ENCODE measurements at regions of chr3 and their contacts with region 1.

Region 1: DNA sequence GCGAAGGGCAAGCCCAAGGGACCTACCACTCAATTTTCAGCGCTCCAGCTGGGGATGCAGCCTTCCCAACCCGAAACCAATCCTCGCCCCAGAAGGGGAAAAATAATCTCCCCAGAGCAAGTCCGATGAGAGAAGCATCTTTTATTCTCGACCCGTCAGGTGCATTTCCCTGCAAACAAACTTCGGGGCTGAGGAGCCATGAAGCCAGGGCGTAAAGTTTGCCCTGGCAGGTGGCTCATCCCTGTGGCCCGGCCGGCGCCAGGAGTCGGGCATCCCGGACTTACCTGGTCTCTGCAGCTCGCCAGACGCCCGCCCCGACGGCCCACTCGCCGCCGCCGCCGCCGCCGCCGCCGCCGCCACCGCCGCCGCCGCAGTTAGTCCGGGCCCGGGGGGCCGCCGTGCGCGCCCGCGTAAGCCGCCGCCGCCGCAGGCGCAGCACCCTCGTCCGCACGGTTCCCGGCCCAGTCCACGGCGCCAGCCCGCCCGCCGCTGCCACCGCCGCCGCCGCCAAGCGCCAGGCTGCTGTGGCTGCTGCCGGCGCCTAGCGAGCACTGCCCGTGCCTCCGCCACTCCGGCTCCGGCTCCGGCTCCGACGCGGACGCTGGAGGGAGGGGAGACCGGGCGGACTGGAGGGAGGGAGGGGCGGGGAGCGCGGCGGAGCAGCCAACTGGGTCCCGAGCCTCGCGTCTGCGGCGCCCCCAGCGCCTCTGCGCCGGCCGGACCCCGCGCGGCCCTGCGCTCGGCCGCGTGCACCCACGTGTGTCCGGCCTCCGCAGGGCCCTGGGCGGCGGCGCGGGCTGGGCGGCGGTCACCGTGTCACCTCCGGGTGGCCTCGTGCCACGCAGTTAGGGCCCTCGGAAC is at the start of gene CNTN3:
- DNase-seq: peak; percentile 26
- H3K4me3 Mint-ChIP-seq: peak within 1 kb of the TSS; percentile 74
- H3K27ac Mint-ChIP-seq: peak within 1 kb of the TSS; percentile 36
- H3K4me1 Mint-ChIP-seq: peaks cover 14% of the 10 kb centered on the region
- H3K27me3 Mint-ChIP-seq: no peaks in the 10 kb centered on the region
- CTCF ChIP-seq: no peak
- total RNA-seq, gene CNTN3: 2.6 and 3.5 TPM in 2 replicates

Region 2: DNA sequence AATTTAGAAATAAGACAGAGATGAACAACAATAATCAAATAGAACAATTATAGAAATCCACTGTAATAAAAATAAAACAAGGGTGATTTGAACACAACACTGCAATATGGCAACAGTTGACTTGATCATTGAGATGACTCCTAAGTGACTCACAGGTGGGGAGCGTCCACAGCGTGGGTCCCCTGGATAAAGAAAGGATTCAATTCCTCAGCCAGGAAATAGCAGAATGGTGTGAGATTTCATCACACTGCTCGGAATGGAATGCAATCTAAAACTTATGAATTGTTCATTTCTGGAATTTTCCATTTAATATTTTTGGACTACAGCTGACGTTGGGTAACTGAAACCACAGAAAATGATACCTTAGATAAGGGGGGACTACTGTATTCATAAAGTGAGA is 81.9 kb before region 1 on chr3:
- CTCF ChIA-PET with region 1: no interaction called
- POLR2A ChIA-PET with region 1: no interaction called
- intact Hi-C with region 1: loop called (anchors 10 kb)
- DNase-seq: peak; percentile 75
- H3K4me3 Mint-ChIP-seq: no peak overlapping the region
- H3K27ac Mint-ChIP-seq: peak overlapping the region; percentile 74
- H3K4me1 Mint-ChIP-seq: peaks cover 33% of the 10 kb centered on the region
- H3K27me3 Mint-ChIP-seq: no peaks in the 10 kb centered on the region
- CTCF ChIP-seq: no peak